T-cell (primary cell): ENCODE measurements at regions of chr12 and their contacts with region 1.

Region 1: DNA sequence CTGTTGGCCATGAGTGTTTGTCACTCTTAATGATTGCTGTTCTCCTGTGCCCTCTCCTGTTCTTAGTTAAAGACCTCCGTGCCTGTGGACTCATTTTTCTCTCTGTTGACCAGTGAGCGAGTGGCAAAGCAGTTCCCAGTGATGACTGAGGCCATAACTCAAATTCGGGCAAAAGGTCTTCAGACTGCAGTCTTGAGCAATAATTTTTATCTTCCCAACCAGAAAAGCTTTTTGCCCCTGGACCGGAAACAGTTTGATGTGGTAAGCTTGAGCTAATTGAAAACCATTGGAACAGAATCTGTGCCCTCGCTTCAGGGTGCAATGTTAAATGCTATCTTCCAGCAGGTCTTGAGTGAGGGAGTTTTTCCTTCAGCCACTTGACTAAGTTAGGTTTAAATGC is 19.8 kb downstream of the ACAD10 start:
- DNase-seq: no peak
- ATAC-seq: no peak
- H3K4me3 ChIP-seq: no peak overlapping the region
- H3K4me3 Mint-ChIP-seq: no peak overlapping the region
- H3K27ac ChIP-seq: no peak overlapping the region
- H3K27ac Mint-ChIP-seq: no peak overlapping the region
- H3K4me1 ChIP-seq: no peaks in the 10 kb centered on the region
- H3K4me1 Mint-ChIP-seq: no peaks in the 10 kb centered on the region
- H3K27me3 ChIP-seq: no peaks in the 10 kb centered on the region
- H3K27me3 Mint-ChIP-seq: no peaks in the 10 kb centered on the region

Region 2: DNA sequence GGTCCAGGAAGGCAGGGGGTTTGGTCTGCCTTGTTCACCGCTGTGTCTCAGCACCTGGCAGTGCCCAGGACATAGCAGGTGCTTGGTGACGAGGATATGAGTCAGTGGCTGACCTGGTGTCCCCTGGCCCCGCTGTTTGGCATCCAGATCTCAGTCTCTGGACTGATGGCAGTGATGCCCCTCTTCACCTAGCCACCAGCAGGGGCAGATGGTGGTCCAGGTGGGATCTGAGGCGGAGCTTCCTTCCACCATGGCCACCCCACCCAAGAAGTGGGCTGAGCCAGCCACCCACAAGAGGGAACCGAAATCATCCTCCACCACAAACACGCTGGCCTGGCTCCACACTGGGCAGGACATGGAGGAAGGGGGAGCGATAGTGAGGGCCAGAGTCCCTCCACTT is 316.0 kb before region 1 on chr12:
- CTCF ChIA-PET with region 1: no interaction called
- POLR2A ChIA-PET with region 1: no interaction called
- DNase-seq: no peak
- ATAC-seq: no peak
- H3K4me3 ChIP-seq: no peak overlapping the region
- H3K4me3 Mint-ChIP-seq: no peak overlapping the region
- H3K27ac ChIP-seq: no peak overlapping the region
- H3K27ac Mint-ChIP-seq: no peak overlapping the region
- H3K4me1 ChIP-seq: no peaks in the 10 kb centered on the region
- H3K4me1 Mint-ChIP-seq: peaks cover 0 to under 1% (median 0%) of the 10 kb centered on the region in 3 donors
- H3K27me3 ChIP-seq: peaks cover 0 to 16% of the 10 kb centered on the region in 2 experiments
- H3K27me3 Mint-ChIP-seq: no peaks in the 10 kb centered on the region

Region 3: GRCh38 chr12:111624540-111624939 is 81.1 kb before region 1 on chr12:
- CTCF ChIA-PET with region 1: no interaction called
- POLR2A ChIA-PET with region 1: no interaction called
- DNase-seq: no peak
- ATAC-seq: no peak
- H3K4me3 ChIP-seq: no peak overlapping the region
- H3K4me3 Mint-ChIP-seq: no peak overlapping the region
- H3K27ac ChIP-seq: no peak overlapping the region
- H3K27ac Mint-ChIP-seq: no peak overlapping the region
- H3K4me1 ChIP-seq: no peaks in the 10 kb centered on the region
- H3K4me1 Mint-ChIP-seq: no peaks in the 10 kb centered on the region
- H3K27me3 ChIP-seq: no peaks in the 10 kb centered on the region
- H3K27me3 Mint-ChIP-seq: no peaks in the 10 kb centered on the region

Region 4: GRCh38 chr12:111685744-111686517 is 19.7 kb before region 1 on chr12 and contains the starts of genes ACAD10 and BRAP:
- CTCF ChIA-PET with region 1: interaction called, 3 to 16 read pairs
- POLR2A ChIA-PET with region 1: interaction called in 1 of 2 experiments, 5 read pairs
- DNase-seq: peak; percentile 83 to 96 (median 90)
- ATAC-seq: peak; percentile 96 to 98 (median 97)
- H3K4me3 ChIP-seq: peak within 1 kb of the TSS; percentile 81 to 92
- H3K4me3 Mint-ChIP-seq: peak within 1 kb of the TSS; percentile 93 to 96 (median 93)
- H3K27ac ChIP-seq: peak within 1 kb of the TSS; percentile 60
- H3K27ac Mint-ChIP-seq: peak within 1 kb of the TSS; percentile 92 to 94
- H3K4me1 ChIP-seq: peaks cover 16 to 24% of the 10 kb centered on the region in 2 experiments
- H3K4me1 Mint-ChIP-seq: peaks cover 44 to 46% (median 45%) of the 10 kb centered on the region in 3 donors
- H3K27me3 ChIP-seq: no peaks in the 10 kb centered on the region
- H3K27me3 Mint-ChIP-seq: peaks cover 0 to 2% of the 10 kb centered on the region in 2 donors
- total RNA-seq, gene ACAD10: 28.8 to 53.4 (median 47.9) TPM
- total RNA-seq, gene BRAP: 20.4 to 23.3 (median 20.6) TPM

Region 5: GRCh38 chr12:111807232-111807631 is 101.6 kb after region 1 on chr12:
- CTCF ChIA-PET with region 1: no interaction called
- POLR2A ChIA-PET with region 1: no interaction called
- DNase-seq: no peak
- ATAC-seq: no peak
- H3K4me3 ChIP-seq: no peak overlapping the region
- H3K4me3 Mint-ChIP-seq: no peak overlapping the region
- H3K27ac ChIP-seq: no peak overlapping the region
- H3K27ac Mint-ChIP-seq: no peak overlapping the region
- H3K4me1 ChIP-seq: no peaks in the 10 kb centered on the region
- H3K4me1 Mint-ChIP-seq: no peaks in the 10 kb centered on the region
- H3K27me3 ChIP-seq: no peaks in the 10 kb centered on the region
- H3K27me3 Mint-ChIP-seq: no peaks in the 10 kb centered on the region